HEK293 (cell line): ENCODE measurements at regions of chrX and their contacts with region 1.

Region 1: DNA sequence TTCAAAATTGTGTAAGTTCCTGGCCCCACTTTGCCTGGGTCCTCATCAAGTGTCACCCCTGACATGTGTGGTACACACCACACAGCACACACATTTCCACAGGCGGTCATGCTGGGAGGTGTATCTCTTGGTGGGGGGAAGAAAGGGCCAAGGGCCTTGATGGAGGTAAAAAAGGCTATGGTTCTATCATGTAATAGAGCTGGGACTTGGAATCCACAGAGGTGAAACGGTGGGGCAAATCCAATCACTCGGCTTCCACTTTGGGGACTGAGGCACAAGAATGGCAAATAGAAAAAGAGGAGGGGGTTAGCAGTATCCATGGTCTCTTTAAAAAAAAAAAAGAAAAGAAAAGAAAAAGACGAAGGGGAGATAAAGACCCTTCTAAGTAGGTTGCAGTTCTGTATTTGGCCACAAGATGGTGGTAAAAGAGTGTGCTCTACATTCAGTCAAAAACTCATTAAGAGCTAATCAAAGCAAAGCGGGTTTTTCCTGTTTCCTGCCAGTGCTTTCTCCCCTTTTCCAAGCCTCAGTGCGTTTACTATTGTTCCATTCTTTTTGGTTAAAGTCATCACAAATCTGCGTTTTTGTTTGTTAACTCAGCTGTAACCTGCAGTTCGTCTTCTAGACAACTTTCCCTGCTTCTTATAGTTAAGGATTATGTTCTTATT is 37.0 kb upstream of the ATP6AP2 start:
- H3K4me3 ChIP-seq: no peak overlapping the region
- H3K27ac ChIP-seq: no peak overlapping the region
- H3K4me1 ChIP-seq: peaks cover 2% of the 10 kb centered on the region
- CTCF ChIP-seq: 0 out of 2 replicates have a peak, but pooled peaks have one; percentile 31

Region 2: GRCh38 chrX:40563791-40564190 is 20.0 kb after region 1 on chrX:
- CTCF ChIA-PET with region 1: interaction called, 14 read pairs
- POLR2A ChIA-PET with region 1: no interaction called
- H3K4me3 ChIP-seq: no peak overlapping the region
- H3K27ac ChIP-seq: no peak overlapping the region
- H3K4me1 ChIP-seq: no peaks in the 10 kb centered on the region
- CTCF ChIP-seq: no peak

Region 3: DNA sequence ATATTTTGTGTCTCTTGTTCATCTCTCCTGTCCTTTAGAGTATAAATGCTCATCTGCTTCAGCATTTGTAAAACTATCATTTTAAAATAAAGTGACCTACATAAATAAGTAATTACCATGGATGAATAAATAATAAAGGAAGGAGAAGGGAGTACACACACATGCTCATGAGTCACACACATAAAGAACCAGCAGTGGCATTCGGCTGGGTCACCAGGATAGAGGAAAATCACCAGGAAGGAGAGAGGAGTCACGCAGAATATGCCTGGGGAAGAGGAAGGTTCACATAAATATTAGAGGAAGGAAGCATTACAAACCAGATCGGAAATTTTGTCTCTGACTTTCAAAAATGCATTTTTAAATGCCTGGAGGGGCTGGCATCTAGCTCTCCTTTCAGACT is 230.0 kb after region 1 on chrX:
- CTCF ChIA-PET with region 1: no interaction called
- POLR2A ChIA-PET with region 1: no interaction called
- H3K4me3 ChIP-seq: no peak overlapping the region
- H3K27ac ChIP-seq: no peak overlapping the region
- H3K4me1 ChIP-seq: no peaks in the 10 kb centered on the region
- CTCF ChIP-seq: no peak

Region 4: DNA sequence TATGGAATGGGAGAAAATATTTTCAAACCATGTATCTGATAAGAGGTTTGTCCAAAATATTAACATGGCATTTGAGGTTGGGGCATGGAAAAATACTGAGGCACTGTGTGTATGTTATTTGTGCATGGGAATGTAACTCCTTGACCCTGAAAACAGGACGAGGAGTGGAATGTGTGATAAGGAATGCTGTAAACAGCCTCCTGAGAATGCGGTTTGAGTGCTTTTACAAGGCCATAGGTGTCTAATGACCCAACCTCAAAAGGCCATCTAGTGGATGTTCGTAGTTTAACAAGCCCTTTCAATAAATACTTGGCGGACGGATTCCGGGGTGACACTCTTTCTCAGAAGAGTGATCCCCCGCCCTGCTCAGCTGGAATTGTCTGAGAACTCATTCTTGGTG is 378.5 kb after region 1 on chrX:
- CTCF ChIA-PET with region 1: interaction called, 11 read pairs
- POLR2A ChIA-PET with region 1: no interaction called
- H3K4me3 ChIP-seq: no peak overlapping the region
- H3K27ac ChIP-seq: no peak overlapping the region
- H3K4me1 ChIP-seq: no peaks in the 10 kb centered on the region
- CTCF ChIP-seq: no peak